ENCODE measurements at regions of chr12 and their contacts with region 1.

Region 1: GRCh38 chr12:39682689-39683477 is 63.3 kb upstream of the ABCD2 start:
- DNase-seq: no peak
- H3K4me3 Mint-ChIP-seq: peak overlapping the region; percentile 75
- H3K27ac Mint-ChIP-seq: peak overlapping the region; percentile 90
- H3K4me1 Mint-ChIP-seq: peaks cover 29% of the 10 kb centered on the region
- H3K27me3 Mint-ChIP-seq: no peaks in the 10 kb centered on the region

Region 2: GRCh38 chr12:39205969-39206368 is 476.9 kb before region 1 on chr12:
- CTCF ChIA-PET with region 1: no interaction called
- intact Hi-C with region 1: no loop called
- DNase-seq: no peak
- H3K4me3 Mint-ChIP-seq: no peak overlapping the region
- H3K27ac Mint-ChIP-seq: no peak overlapping the region
- H3K4me1 Mint-ChIP-seq: no peaks in the 10 kb centered on the region
- H3K27me3 Mint-ChIP-seq: no peaks in the 10 kb centered on the region

Region 3: GRCh38 chr12:39467432-39467870 is 215.4 kb before region 1 on chr12:
- CTCF ChIA-PET with region 1: no interaction called
- intact Hi-C with region 1: loop called (anchors 5 kb)
- DNase-seq: peak; percentile 32
- H3K4me3 Mint-ChIP-seq: no peak overlapping the region
- H3K27ac Mint-ChIP-seq: peak overlapping the region; percentile 46
- H3K4me1 Mint-ChIP-seq: peaks cover 18% of the 10 kb centered on the region
- H3K27me3 Mint-ChIP-seq: no peaks in the 10 kb centered on the region

Region 4: DNA sequence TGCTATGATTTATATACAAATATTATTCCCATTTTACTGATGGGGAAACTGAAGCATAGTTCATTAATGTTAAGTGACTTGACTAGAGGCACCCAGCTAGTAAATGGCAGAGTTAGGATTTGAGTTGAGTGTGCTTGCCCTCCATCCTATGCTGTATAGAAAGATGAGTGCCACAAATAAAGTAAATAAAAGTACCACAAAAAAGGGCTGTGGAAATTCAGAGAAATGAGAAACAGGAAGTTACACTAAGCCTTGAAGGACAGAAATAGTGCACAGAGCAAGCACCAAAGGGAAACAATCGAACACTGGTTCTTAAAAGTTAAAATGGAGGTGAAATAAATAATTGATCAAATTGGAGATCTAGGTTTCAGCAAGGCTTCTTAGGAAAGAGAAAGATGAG is 54.0 kb before region 1 on chr12:
- CTCF ChIA-PET with region 1: no interaction called
- intact Hi-C with region 1: loop called (anchors 2 kb)
- DNase-seq: no peak
- H3K4me3 Mint-ChIP-seq: peak overlapping the region; percentile 44
- H3K27ac Mint-ChIP-seq: peak overlapping the region; percentile 93
- H3K4me1 Mint-ChIP-seq: peaks cover 54% of the 10 kb centered on the region
- H3K27me3 Mint-ChIP-seq: no peaks in the 10 kb centered on the region

Region 5: GRCh38 chr12:39646963-39647362 is 35.9 kb before region 1 on chr12:
- CTCF ChIA-PET with region 1: no interaction called
- intact Hi-C with region 1: loop called (anchors 2 kb)
- DNase-seq: no peak
- H3K4me3 Mint-ChIP-seq: no peak overlapping the region
- H3K27ac Mint-ChIP-seq: no peak overlapping the region
- H3K4me1 Mint-ChIP-seq: peaks cover 22% of the 10 kb centered on the region
- H3K27me3 Mint-ChIP-seq: no peaks in the 10 kb centered on the region